Aorta (tissue), 5 donors: ENCODE measurements at regions of chr19 and their contacts with region 1.

Region 1: DNA sequence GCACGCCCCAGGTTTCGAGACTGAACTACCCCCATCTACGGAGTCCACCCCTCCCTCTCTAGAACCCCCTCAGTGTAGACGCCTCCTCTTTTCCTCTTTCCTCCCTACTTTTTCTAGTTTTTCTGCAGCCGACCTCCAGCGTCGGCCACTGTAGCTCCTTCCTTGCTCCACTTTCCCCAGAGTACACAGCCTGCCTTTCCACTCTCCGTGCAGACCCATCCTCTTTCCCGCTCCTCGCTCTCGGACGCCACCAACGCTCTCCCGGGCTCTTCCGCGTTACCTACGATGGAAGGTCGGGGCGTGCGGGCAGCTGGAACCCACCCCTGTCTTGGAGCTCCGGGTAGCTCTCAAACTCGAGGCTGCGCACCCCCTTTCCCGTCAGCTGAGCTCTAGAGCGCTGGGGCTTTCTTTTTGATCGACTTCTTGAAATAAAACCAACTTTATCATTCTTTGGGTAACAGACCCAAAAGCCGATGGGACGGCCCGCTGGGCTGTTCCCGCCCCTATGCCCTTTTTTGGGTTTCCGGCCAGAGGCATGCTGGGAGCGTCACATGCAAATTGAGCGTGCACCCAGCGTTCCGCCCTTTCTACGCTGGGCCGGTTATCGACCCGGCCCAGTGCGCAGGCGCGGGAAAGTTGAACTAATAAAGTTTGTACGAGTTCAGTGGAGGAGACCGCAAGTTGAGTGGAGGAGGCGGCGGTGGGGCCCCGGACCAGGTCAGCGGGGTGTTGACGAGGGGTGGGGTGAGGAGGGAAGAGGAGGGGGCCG is at the starts of genes BCL2L12 and IRF3:
- DNase-seq: peak; percentile 99 to 100
- ATAC-seq: peak; percentile 95
- H3K4me3 ChIP-seq: peak within 1 kb of the TSS; percentile 49 to 50
- H3K27ac ChIP-seq: peak within 1 kb of the TSS in 1 of 2 donors; percentile 80
- H3K4me1 ChIP-seq: no peaks in the 10 kb centered on the region
- H3K27me3 ChIP-seq: no peaks in the 10 kb centered on the region
- total RNA-seq, gene BCL2L12: 9.9 to 14.0 TPM
- total RNA-seq, gene IRF3: 53.7 to 82.7 TPM

Region 2: GRCh38 chr19:49512970-49513745 is 152.4 kb before region 1 on chr19:
- intact Hi-C with region 1: loop called in 1 of 2 experiments (anchors 5 kb)
- DNase-seq: peak in 1 of 2 donors; percentile 82
- ATAC-seq: peak; percentile 78
- H3K4me3 ChIP-seq: peak overlapping the region; percentile 80 to 84
- H3K27ac ChIP-seq: peak overlapping the region; percentile 20 to 72
- H3K4me1 ChIP-seq: no peaks in the 10 kb centered on the region
- H3K27me3 ChIP-seq: no peaks in the 10 kb centered on the region

Region 3: GRCh38 chr19:49590071-49590970 is 75.2 kb before region 1 on chr19:
- intact Hi-C with region 1: loop called (anchors 2 to 5 kb)
- DNase-seq: peak; percentile 97 to 98
- ATAC-seq: peak; percentile 86
- H3K4me3 ChIP-seq: peak overlapping the region; percentile 46 to 93
- H3K27ac ChIP-seq: peak overlapping the region in 1 of 2 donors; percentile 24
- H3K4me1 ChIP-seq: no peaks in the 10 kb centered on the region
- H3K27me3 ChIP-seq: no peaks in the 10 kb centered on the region

Region 4: GRCh38 chr19:49832556-49832955 is 167.0 kb after region 1 on chr19:
- intact Hi-C with region 1: no loop called
- DNase-seq: no peak
- ATAC-seq: no peak
- H3K4me3 ChIP-seq: no peak overlapping the region
- H3K27ac ChIP-seq: no peak overlapping the region
- H3K4me1 ChIP-seq: no peaks in the 10 kb centered on the region
- H3K27me3 ChIP-seq: no peaks in the 10 kb centered on the region